ENCODE measurements at regions of chr9 and their contacts with region 1.

Region 1: DNA sequence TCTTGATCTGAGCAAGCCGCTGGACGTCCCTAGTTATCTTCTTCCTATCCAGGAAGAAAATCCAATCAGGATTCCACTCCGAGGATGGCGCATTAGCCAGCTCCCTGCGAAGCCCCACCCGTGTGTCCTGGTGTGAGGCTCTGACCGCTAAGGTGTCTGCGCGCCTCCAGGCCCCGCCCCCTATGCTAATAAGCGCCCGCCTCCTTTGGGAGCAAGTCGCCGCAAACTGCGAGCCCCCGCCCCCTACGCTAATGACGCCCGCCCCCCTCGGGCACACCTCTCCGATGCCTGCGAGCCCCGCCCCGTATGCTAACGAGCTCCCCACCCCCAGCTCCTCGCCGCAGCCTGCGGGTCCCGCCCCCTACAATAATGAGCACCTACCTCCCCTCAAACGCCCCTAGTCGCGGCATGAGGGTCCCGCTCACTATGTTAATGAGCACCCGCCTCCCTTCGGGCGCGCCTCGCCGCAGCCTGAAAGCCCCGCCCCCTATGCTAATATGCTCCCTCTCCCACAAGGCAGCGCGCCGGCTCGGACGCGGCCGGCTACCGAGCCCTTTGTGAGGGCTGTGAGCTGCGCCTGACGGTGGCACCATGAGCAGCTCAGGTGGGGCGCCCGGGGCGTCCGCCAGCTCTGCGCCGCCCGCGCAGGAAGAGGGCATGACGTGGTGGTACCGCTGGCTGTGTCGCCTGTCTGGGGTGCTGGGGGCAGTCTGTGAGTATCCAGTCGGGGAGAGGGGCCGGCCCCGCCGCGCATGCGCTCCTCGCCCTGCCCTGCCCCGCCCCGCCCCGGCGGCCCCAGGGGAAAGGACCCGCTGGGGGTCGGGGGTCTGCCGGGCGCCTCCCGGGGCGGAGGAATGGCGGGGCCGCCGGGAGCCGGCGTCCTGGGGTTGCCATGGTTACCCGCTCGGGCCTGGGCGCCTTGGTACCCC is at the start of gene CACFD1:
- DNase-seq: peak; percentile 93
- H3K4me3 Mint-ChIP-seq: peak within 1 kb of the TSS; percentile 80
- H3K27ac Mint-ChIP-seq: peak within 1 kb of the TSS; percentile 41
- H3K4me1 Mint-ChIP-seq: peaks cover 2% of the 10 kb centered on the region
- H3K27me3 Mint-ChIP-seq: no peaks in the 10 kb centered on the region
- total RNA-seq, gene CACFD1: 0.35 to 0.45 TPM

Region 2: GRCh38 chr9:133417541-133418461 is 41.9 kb before region 1 on chr9 and contains the start of gene REXO4:
- CTCF ChIA-PET with region 1: no interaction called
- intact Hi-C with region 1: loop called (anchors 2 kb)
- DNase-seq: peak; percentile 86
- H3K4me3 Mint-ChIP-seq: peak within 1 kb of the TSS; percentile 92
- H3K27ac Mint-ChIP-seq: peak within 1 kb of the TSS; percentile 91
- H3K4me1 Mint-ChIP-seq: peaks cover 54% of the 10 kb centered on the region
- H3K27me3 Mint-ChIP-seq: no peaks in the 10 kb centered on the region
- total RNA-seq, gene REXO4: 22.5 to 27.0 TPM

Region 3: GRCh38 chr9:133478851-133479711 is 19.3 kb after region 1 on chr9 and contains the start of gene SLC2A6:
- CTCF ChIA-PET with region 1: interaction called, 3 read pairs
- intact Hi-C with region 1: loop called (anchors 1 kb)
- DNase-seq: peak; percentile 75
- H3K4me3 Mint-ChIP-seq: peak within 1 kb of the TSS; percentile 65
- H3K27ac Mint-ChIP-seq: no peak within 1 kb of the TSS
- H3K4me1 Mint-ChIP-seq: peaks cover 6% of the 10 kb centered on the region
- H3K27me3 Mint-ChIP-seq: no peaks in the 10 kb centered on the region
- total RNA-seq, gene SLC2A6: 0.62 to 0.83 TPM

Region 4: DNA sequence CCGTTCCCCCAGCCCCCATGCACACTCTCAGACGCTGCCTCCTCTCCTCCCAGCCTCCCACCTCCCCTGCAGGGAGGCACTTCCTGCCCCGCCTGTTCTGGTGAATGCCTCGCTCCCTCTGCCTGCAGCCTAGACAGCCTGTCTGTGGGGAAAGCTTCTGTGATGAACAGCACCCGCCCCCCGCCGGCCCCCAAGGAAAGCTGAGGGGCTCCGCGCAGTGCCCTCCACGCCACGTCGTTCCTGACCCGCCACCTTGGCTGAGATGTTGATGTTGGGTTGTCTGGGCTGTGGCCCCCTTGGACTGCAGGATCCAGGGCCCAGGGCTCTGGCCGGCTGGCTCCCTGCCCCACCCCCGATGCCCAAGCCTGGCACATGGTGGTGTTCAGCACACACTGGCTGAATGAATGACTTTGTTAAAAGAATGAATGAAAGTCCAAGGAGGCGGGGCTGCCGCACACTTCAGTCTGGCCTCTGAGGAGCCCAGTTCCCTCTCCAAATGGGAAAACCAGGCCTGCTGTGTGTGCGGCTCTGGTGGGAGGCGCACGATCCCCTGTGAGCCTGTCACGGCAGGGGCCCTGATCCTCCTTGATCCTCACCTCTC is 67.1 kb after region 1 on chr9:
- CTCF ChIA-PET with region 1: no interaction called
- intact Hi-C with region 1: no loop called
- DNase-seq: no peak
- H3K4me3 Mint-ChIP-seq: no peak overlapping the region
- H3K27ac Mint-ChIP-seq: no peak overlapping the region
- H3K4me1 Mint-ChIP-seq: peaks cover 7% of the 10 kb centered on the region
- H3K27me3 Mint-ChIP-seq: no peaks in the 10 kb centered on the region

Measured in activated naive CD4-positive, alpha-beta T cell treated with anti-CD3 and anti-CD28 coated beads for 36 hours (primary cell).